ENCODE measurements at regions of chr16 and their contacts with region 1.

Region 1: DNA sequence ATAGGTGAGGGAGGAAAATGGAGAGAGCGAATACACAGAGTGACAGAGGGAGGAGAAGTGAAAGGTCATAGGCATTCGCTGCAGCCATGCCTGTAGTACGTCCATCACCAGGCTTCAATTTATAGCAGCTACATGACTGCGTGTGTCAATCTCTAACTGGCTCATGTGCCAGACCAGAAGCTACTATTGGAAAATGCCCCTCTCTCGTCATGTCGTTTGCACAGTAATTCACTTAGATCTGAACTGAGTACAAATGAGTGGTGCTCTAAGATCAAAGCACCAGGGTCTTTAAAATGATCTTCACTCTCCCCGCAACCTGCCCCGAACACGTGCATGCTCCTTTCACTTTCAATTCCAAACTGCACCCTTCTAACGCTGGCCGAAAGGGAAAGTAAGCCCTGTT is 51.3 kb downstream of the ADCY9 start:
- DNase-seq: peak in 1 of 2 donors; percentile 73
- ATAC-seq: peak; percentile 70 to 83 (median 79)
- H3K4me3 ChIP-seq: peak overlapping the region; percentile 22
- H3K4me3 Mint-ChIP-seq: peak overlapping the region; percentile 75
- H3K27ac ChIP-seq: peak overlapping the region; percentile 77
- H3K27ac Mint-ChIP-seq: peak overlapping the region; percentile 90 to 95
- H3K4me1 ChIP-seq: peaks cover 17% of the 10 kb centered on the region
- H3K4me1 Mint-ChIP-seq: peaks cover 34 to 37% of the 10 kb centered on the region in 2 donors
- H3K27me3 ChIP-seq: no peaks in the 10 kb centered on the region
- H3K27me3 Mint-ChIP-seq: no peaks in the 10 kb centered on the region
- CTCF ChIP-seq: no peak

Region 2: GRCh38 chr16:4019371-4019791 is 45.6 kb before region 1 on chr16:
- intact Hi-C with region 1: loop called (anchors 1 kb)
- DNase-seq: peak in 1 of 2 donors; percentile 32
- ATAC-seq: peak; percentile 35 to 52 (median 46)
- H3K4me3 ChIP-seq: peak overlapping the region; percentile 31
- H3K4me3 Mint-ChIP-seq: peak overlapping the region; percentile 91
- H3K27ac ChIP-seq: peak overlapping the region; percentile 81
- H3K27ac Mint-ChIP-seq: peak overlapping the region; percentile 97 to 98
- H3K4me1 ChIP-seq: peaks cover 61% of the 10 kb centered on the region
- H3K4me1 Mint-ChIP-seq: peaks cover 59% of the 10 kb centered on the region in 2 donors
- H3K27me3 ChIP-seq: no peaks in the 10 kb centered on the region
- H3K27me3 Mint-ChIP-seq: no peaks in the 10 kb centered on the region
- CTCF ChIP-seq: no peak

Region 3: DNA sequence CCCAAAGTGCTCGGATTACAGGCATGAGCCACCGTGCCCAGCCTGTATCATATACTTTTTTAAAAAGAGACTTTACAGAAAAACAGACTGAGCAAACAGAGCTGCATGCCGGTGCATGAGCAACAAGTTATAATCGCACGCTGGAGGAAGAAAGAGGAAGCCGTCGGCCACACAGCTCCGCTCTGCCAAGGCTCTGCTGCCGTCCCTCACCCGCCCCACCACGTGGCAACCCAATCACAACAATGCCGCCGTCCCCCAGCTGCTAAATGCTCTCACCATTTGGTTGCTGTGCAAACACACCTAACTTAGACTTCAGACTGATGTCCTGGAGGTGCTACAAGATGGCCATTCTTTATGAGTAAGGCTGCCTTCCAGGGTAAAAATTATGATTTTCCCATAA is 32.2 kb before region 1 on chr16:
- intact Hi-C with region 1: loop called (anchors 5 kb)
- DNase-seq: peak; percentile 46 to 56
- ATAC-seq: peak; percentile 88 to 91 (median 88)
- H3K4me3 ChIP-seq: no peak overlapping the region
- H3K4me3 Mint-ChIP-seq: peak overlapping the region; percentile 42
- H3K27ac ChIP-seq: peak overlapping the region; percentile 21
- H3K27ac Mint-ChIP-seq: peak overlapping the region; percentile 75 to 84
- H3K4me1 ChIP-seq: peaks cover 31% of the 10 kb centered on the region
- H3K4me1 Mint-ChIP-seq: peaks cover 34 to 44% of the 10 kb centered on the region in 2 donors
- H3K27me3 ChIP-seq: no peaks in the 10 kb centered on the region
- H3K27me3 Mint-ChIP-seq: no peaks in the 10 kb centered on the region
- CTCF ChIP-seq: no peak

Region 4: DNA sequence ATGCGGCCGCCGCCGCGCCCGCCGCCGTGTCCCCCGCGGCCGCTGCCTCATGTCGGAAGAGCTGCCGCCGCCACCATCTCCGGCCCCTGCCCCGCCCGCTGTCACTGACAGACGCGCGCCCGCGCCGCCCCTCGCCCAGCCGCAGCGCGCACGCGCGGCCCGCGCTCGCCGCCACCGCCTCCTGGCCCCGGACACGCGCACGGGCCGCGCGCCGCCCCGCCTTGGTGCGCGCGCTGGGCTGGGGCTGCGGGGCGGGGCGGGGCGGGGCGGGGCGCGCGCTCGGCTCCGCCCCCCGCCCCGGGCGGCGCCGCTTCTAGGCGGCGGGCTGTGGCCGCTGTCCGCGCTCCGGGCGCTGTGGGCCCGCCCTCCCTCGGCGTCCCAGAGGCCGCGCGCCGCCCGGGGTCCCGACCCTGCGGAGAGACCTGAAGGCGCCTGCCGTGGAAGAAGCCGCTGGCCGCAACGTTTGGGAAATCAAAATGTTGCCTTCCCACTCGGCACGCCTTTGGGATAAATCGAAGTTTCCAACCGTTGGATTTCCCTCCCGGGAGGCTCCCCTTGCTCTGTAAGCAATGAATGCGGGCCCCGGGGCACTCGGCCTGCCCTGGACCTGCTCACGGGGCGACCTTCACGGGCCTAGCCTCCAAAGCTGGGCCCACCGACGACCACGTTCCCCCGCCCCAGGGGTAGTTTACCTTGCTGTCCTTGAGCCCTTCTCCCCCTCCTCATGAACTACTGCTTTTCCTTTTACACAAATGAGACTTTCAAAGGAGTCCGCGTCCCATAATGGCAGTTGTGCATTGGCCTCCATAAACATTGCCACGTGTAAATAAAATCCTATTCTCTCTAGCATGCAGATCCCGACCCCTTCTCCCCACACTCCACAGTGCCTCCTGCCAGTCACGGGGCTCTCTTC is 51.6 kb after region 1 on chr16 and contains the start of gene ADCY9:
- intact Hi-C with region 1: loop called (anchors 10 kb)
- DNase-seq: peak; percentile 80 to 93
- ATAC-seq: peak; percentile 77 to 92 (median 78)
- H3K4me3 ChIP-seq: peak within 1 kb of the TSS; percentile 56
- H3K4me3 Mint-ChIP-seq: peak within 1 kb of the TSS; percentile 88
- H3K27ac ChIP-seq: peak within 1 kb of the TSS; percentile 24
- H3K27ac Mint-ChIP-seq: peak within 1 kb of the TSS; percentile 71 to 88
- H3K4me1 ChIP-seq: peaks cover 41% of the 10 kb centered on the region
- H3K4me1 Mint-ChIP-seq: peaks cover 42 to 44% of the 10 kb centered on the region in 2 donors
- H3K27me3 ChIP-seq: no peaks in the 10 kb centered on the region
- H3K27me3 Mint-ChIP-seq: no peaks in the 10 kb centered on the region
- CTCF ChIP-seq: no peak
- total RNA-seq, gene ADCY9: 28.0 to 52.4 (median 38.3) TPM